ENCODE measurements at regions of chr9 and their contacts with region 1.

Region 1: DNA sequence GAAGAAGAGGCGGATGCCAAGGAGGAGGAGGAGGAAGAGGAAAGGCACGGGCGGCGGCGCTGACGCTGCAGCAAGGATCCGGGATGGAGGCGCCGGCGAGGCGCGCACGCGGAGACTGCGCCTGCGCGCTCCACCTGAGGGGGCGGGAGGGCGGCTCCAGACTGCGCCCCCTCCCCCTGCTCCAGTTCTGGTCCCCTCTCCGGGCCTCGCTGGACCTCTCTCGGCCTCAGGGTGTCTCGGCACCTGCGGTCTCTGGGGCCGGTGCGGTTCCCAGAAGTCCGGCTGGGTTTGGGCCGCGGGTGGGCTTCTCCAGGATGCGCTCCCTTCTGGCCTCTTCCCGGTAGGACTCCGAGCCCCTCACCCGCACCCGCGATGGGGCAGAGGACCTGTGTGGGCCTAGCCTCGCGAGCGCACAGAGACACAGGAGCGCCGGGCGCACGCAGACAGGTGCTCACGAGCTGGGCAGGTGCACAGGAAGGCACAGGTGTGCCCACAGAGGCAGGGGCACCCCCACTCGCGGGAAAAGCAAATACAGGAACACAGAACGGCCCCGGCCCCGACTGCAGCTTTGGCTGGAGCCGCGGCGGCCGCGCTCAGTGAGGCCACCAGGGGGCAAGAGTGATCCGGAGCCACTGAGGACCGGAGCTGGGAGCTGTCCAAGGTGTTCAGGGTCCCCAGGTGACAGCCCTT is at the start of gene NPDC1:
- DNase-seq: peak; percentile 92
- ATAC-seq: peak; percentile 84
- H3K4me3 Mint-ChIP-seq: peak within 1 kb of the TSS; percentile 63
- H3K27ac Mint-ChIP-seq: no peak within 1 kb of the TSS
- H3K4me1 Mint-ChIP-seq: peaks cover 10% of the 10 kb centered on the region
- H3K27me3 Mint-ChIP-seq: peaks cover 42% of the 10 kb centered on the region
- CTCF ChIP-seq: peak; percentile 83
- total RNA-seq, gene NPDC1: 18.2 to 21.2 TPM

Region 2: GRCh38 chr9:137007108-137007815 is 39.0 kb before region 1 on chr9:
- CTCF ChIA-PET with region 1: no interaction called
- POLR2A ChIA-PET with region 1: no interaction called
- intact Hi-C with region 1: no loop called
- DNase-seq: no peak
- ATAC-seq: no peak
- H3K4me3 Mint-ChIP-seq: no peak overlapping the region
- H3K27ac Mint-ChIP-seq: no peak overlapping the region
- H3K4me1 Mint-ChIP-seq: peaks cover 13% of the 10 kb centered on the region
- H3K27me3 Mint-ChIP-seq: no peaks in the 10 kb centered on the region
- CTCF ChIP-seq: no peak

Region 3: GRCh38 chr9:137064027-137064879 is 18.0 kb after region 1 on chr9:
- CTCF ChIA-PET with region 1: interaction called, 164 read pairs
- POLR2A ChIA-PET with region 1: interaction called, 10 read pairs
- intact Hi-C with region 1: no loop called
- DNase-seq: peak; percentile 68
- ATAC-seq: peak; percentile 35
- H3K4me3 Mint-ChIP-seq: no peak overlapping the region
- H3K27ac Mint-ChIP-seq: no peak overlapping the region
- H3K4me1 Mint-ChIP-seq: peaks cover 7% of the 10 kb centered on the region
- H3K27me3 Mint-ChIP-seq: peaks cover 1% of the 10 kb centered on the region
- CTCF ChIP-seq: peak; percentile 98

Region 4: GRCh38 chr9:137086531-137087408 is 40.5 kb after region 1 on chr9 and contains the start of gene MAN1B1:
- CTCF ChIA-PET with region 1: interaction called, 10 read pairs
- POLR2A ChIA-PET with region 1: interaction called, 3 read pairs
- intact Hi-C with region 1: no loop called
- DNase-seq: peak; percentile 100
- ATAC-seq: peak; percentile 86
- H3K4me3 Mint-ChIP-seq: peak within 1 kb of the TSS; percentile 90
- H3K27ac Mint-ChIP-seq: peak within 1 kb of the TSS; percentile 94
- H3K4me1 Mint-ChIP-seq: peaks cover 38% of the 10 kb centered on the region
- H3K27me3 Mint-ChIP-seq: no peaks in the 10 kb centered on the region
- CTCF ChIP-seq: no peak
- total RNA-seq, gene MAN1B1: 31.1 to 33.2 TPM